ENCODE measurements at regions of chr18 and their contacts with region 1.

Region 1: GRCh38 chr18:34399892-34400291 is 175.2 kb upstream of the NOL4 start:
- DNase-seq: no peak
- ATAC-seq: peak in 1 of 2 donors; percentile 41
- H3K4me3 ChIP-seq: no peak overlapping the region
- H3K27ac ChIP-seq: peak overlapping the region in 1 of 4 donors; percentile 32
- H3K4me1 ChIP-seq: peaks cover 23 to 28% of the 10 kb centered on the region in 2 donors
- H3K27me3 ChIP-seq: no peaks in the 10 kb centered on the region
- CTCF ChIP-seq: no peak
- POLR2A ChIP-seq: no peak

Region 2: GRCh38 chr18:34493099-34493544 is 93.2 kb after region 1 on chr18:
- in situ Hi-C with region 1: no loop called
- intact Hi-C with region 1: loop called (anchors 5 kb)
- DNase-seq: peak; percentile 63 to 85
- ATAC-seq: peak; percentile 87 to 88
- H3K4me3 ChIP-seq: peak overlapping the region; percentile 69 to 79 (median 72)
- H3K27ac ChIP-seq: peak overlapping the region; percentile 82 to 94 (median 92)
- H3K4me1 ChIP-seq: peaks cover 19 to 20% of the 10 kb centered on the region in 2 donors
- H3K27me3 ChIP-seq: no peaks in the 10 kb centered on the region
- CTCF ChIP-seq: no peak
- POLR2A ChIP-seq: no peak